Common myeloid progenitor, CD34-positive (primary cell): ENCODE measurements at regions of chr15 and their contacts with region 1.

Region 1: DNA sequence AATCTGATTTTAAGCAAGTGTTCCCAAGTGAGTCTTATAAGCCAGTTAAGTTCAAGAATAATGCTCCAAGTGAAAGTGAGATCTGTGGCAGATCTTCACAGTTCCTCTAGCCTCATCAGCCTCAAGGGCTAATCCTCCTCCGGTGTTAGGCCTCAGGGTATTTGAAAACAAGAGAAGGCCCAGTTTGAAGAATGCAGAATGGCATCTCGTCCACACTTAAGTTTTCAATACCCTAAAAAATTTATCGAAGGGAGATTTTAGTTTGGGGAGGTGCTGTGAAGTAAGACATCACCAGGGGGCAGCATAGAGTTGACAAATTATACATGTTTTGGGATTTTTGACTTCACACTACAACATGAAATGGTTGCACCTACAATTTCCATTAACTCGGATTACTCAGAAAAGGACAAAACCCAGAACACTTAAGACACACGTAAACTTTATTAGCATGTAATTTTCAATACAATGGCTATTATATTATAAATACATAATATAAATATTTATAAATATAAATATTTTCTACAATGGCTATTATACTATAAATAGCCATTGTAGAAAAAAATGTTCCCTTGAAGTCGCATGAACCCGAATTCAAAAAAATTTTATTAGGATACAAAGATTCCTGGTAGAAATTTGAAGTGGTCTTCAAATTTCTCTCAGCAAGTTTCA is 2.3 kb upstream of the TMEM266 start:
- DNase-seq: peak; percentile 69 to 76 (median 73)
- H3K4me3 ChIP-seq: peak overlapping the region in 4 of 7 experiments; percentile 38 to 74 (median 63)
- H3K27ac ChIP-seq: no peak overlapping the region
- H3K4me1 ChIP-seq: peaks cover 9 to 31% (median 25%) of the 10 kb centered on the region in 4 experiments
- H3K27me3 ChIP-seq: peaks cover 8 to 40% (median 25%) of the 10 kb centered on the region in 5 experiments

Region 2: GRCh38 chr15:76150971-76151598 is 93.6 kb after region 1 on chr15:
- CTCF ChIA-PET with region 1: interaction called, 12 read pairs
- POLR2A ChIA-PET with region 1: no interaction called
- DNase-seq: peak; percentile 75 to 90 (median 87)
- H3K4me3 ChIP-seq: peak overlapping the region in 6 of 7 experiments; percentile 13 to 71 (median 29)
- H3K27ac ChIP-seq: no peak overlapping the region
- H3K4me1 ChIP-seq: peaks cover 0 to 14% (median 12%) of the 10 kb centered on the region in 4 experiments
- H3K27me3 ChIP-seq: peaks cover 0 to 4% (median 0%) of the 10 kb centered on the region in 5 experiments